Activated B cell treated with CpG ODN at 0.5 μM for 24 hours (primary cell): ENCODE measurements at regions of chr7 and their contacts with region 1.

Region 1: GRCh38 chr7:142796608-142797385 is 26.0 kb downstream of the PRSS2 start:
- DNase-seq: peak; percentile 47
- ATAC-seq: peak; percentile 44
- H3K4me3 Mint-ChIP-seq: peak overlapping the region; percentile 97
- H3K27ac Mint-ChIP-seq: peak overlapping the region; percentile 99
- H3K4me1 Mint-ChIP-seq: peaks cover 83% of the 10 kb centered on the region
- H3K27me3 Mint-ChIP-seq: no peaks in the 10 kb centered on the region
- CTCF ChIP-seq: no peak

Region 2: GRCh38 chr7:142771353-142771723 is 25.5 kb before region 1 on chr7:
- CTCF ChIA-PET with region 1: no interaction called
- POLR2A ChIA-PET with region 1: interaction called, 10 read pairs
- intact Hi-C with region 1: no loop called
- DNase-seq: no peak
- ATAC-seq: peak; percentile 85
- H3K4me3 Mint-ChIP-seq: peak overlapping the region; percentile 32
- H3K27ac Mint-ChIP-seq: no peak overlapping the region
- H3K4me1 Mint-ChIP-seq: peaks cover 23% of the 10 kb centered on the region
- H3K27me3 Mint-ChIP-seq: peaks cover 9% of the 10 kb centered on the region
- CTCF ChIP-seq: no peak